Head of caudate nucleus (tissue), 42 donors: ENCODE measurements at regions of chr15 and their contacts with region 1.

Region 1: GRCh38 chr15:63407612-63408011 is 26.0 kb upstream of the CA12 start:
- DNase-seq: no peak

Region 2: DNA sequence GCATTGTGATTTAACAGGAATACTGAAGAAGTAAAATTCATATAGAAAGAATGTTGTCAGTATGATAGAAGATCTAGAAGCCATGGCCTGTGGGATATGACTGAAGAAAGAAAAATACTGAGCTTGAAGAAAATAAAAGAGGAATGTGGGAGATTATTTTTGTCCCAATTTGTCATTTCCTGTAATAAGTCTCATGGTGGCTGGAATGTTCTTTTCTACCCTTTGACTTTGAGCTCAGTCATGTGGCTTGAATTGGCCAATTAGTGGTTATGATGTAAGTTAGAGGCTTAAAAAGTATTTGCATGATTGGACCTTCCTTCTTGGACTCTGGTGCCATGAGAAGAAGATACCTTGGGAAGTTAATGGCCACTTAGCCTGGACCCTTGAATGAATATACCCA is 116.1 kb before region 1 on chr15:
- intact Hi-C with region 1: loop called (anchors 5 kb)
- DNase-seq: no peak